ENCODE measurements at regions of chr3 and their contacts with region 1.

Region 1: DNA sequence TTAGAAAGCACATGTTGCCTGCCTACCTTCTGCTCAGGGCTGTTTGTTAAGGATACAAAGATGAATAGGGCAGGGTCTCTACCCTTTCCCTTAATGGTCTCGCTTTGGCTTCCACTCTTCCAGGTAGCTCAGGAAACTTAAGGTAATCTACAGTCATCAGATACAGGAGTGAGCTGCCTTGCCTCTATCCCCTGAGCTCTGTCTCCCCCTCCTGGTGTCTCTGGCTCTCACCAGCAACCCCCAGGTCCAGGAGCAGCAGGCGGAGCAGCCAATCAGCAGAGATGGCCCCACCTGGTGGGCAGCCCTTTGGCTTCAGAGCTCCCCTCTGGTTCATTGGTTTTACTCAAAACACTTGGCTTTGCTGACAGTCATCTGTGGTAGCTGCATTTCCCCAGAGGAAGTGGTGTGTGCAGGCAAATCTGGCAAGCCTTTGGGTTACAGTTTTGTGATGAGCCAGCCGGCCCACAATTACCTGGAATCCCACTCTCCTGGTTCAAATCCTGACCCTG is 8.5 kb upstream of the CX3CR1 start:
- DNase-seq: peak; percentile 91
- ATAC-seq: peak; percentile 96
- H3K4me3 Mint-ChIP-seq: no peak overlapping the region
- H3K27ac Mint-ChIP-seq: peak overlapping the region; percentile 0
- H3K4me1 Mint-ChIP-seq: peaks cover 46% of the 10 kb centered on the region
- H3K27me3 Mint-ChIP-seq: peaks cover 3% of the 10 kb centered on the region

Region 2: GRCh38 chr3:38662544-38662943 is 625.8 kb before region 1 on chr3:
- CTCF ChIA-PET with region 1: no interaction called
- POLR2A ChIA-PET with region 1: no interaction called
- DNase-seq: no peak
- ATAC-seq: no peak
- H3K4me3 Mint-ChIP-seq: no peak overlapping the region
- H3K27ac Mint-ChIP-seq: no peak overlapping the region
- H3K4me1 Mint-ChIP-seq: no peaks in the 10 kb centered on the region
- H3K27me3 Mint-ChIP-seq: peaks cover 30% of the 10 kb centered on the region

Region 3: DNA sequence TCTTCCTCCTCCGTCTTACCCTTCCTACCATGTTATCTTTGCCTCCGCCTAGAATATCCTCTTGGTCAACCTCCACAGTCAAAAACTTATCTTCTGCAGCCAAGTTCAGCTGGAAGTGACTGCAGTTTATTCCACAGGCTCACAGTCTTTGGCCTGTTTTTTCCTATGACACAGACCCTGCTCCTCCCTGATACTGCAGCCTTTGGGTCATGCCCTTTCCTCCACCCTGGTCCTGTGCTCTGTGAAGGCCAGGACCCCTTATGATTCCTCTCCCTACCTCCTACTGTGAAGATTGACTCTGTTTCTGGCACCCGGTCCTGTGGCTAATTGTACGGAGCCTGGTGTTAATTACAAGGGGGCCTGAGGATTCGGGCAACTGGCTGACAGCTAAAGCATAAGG is 589.6 kb before region 1 on chr3:
- CTCF ChIA-PET with region 1: no interaction called
- POLR2A ChIA-PET with region 1: no interaction called
- DNase-seq: no peak
- ATAC-seq: no peak
- H3K4me3 Mint-ChIP-seq: no peak overlapping the region
- H3K27ac Mint-ChIP-seq: no peak overlapping the region
- H3K4me1 Mint-ChIP-seq: no peaks in the 10 kb centered on the region
- H3K27me3 Mint-ChIP-seq: peaks cover 11% of the 10 kb centered on the region

Region 4: GRCh38 chr3:39086144-39086543 is 202.2 kb before region 1 on chr3:
- CTCF ChIA-PET with region 1: interaction called, 31 read pairs
- POLR2A ChIA-PET with region 1: no interaction called
- DNase-seq: no peak
- ATAC-seq: no peak
- H3K4me3 Mint-ChIP-seq: no peak overlapping the region
- H3K27ac Mint-ChIP-seq: no peak overlapping the region
- H3K4me1 Mint-ChIP-seq: peaks cover 5% of the 10 kb centered on the region
- H3K27me3 Mint-ChIP-seq: no peaks in the 10 kb centered on the region

Region 5: GRCh38 chr3:39146984-39147591 is 141.3 kb before region 1 on chr3:
- CTCF ChIA-PET with region 1: interaction called, 11 read pairs
- POLR2A ChIA-PET with region 1: no interaction called
- DNase-seq: peak; percentile 77
- ATAC-seq: peak; percentile 48
- H3K4me3 Mint-ChIP-seq: peak overlapping the region; percentile 79
- H3K27ac Mint-ChIP-seq: peak overlapping the region; percentile 99
- H3K4me1 Mint-ChIP-seq: peaks cover 75% of the 10 kb centered on the region
- H3K27me3 Mint-ChIP-seq: no peaks in the 10 kb centered on the region

Region 6: DNA sequence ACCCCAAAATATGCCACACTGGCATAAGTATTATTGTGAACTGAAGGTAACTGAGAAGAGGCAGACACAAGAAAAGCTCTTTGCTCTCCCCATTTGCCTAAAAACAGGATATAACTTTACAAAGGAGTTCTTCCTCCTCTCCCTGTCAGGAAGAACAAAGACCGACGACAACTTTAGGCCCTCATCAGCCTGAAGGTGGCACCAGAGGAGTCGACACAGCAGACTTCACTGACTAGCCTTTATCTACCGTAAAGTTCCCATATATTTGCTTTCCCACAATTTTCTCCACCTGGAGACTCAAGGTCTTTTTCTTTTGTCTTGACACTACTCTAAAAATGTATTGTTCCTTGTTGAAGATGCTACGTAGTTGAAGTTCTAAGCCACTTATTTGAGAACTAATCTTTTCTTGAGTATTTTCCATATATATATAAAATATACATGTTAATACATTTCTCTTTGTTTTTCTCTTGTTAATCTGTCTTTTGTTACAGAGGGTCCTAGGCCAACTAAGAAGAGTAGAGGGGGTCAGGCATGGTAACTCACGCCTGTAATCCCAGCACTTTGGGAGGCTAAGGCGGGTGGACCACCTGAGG is 79.8 kb before region 1 on chr3:
- CTCF ChIA-PET with region 1: interaction called, 23 read pairs
- POLR2A ChIA-PET with region 1: interaction called, 5 read pairs
- DNase-seq: peak; percentile 55
- ATAC-seq: peak; percentile 69
- H3K4me3 Mint-ChIP-seq: no peak overlapping the region
- H3K27ac Mint-ChIP-seq: no peak overlapping the region
- H3K4me1 Mint-ChIP-seq: peaks cover 12% of the 10 kb centered on the region
- H3K27me3 Mint-ChIP-seq: peaks cover 23% of the 10 kb centered on the region

Region 7: GRCh38 chr3:39260957-39261356 is 27.4 kb before region 1 on chr3:
- CTCF ChIA-PET with region 1: interaction called, 29 read pairs
- POLR2A ChIA-PET with region 1: no interaction called
- DNase-seq: peak; percentile 80
- ATAC-seq: peak; percentile 93
- H3K4me3 Mint-ChIP-seq: no peak overlapping the region
- H3K27ac Mint-ChIP-seq: no peak overlapping the region
- H3K4me1 Mint-ChIP-seq: peaks cover 26% of the 10 kb centered on the region
- H3K27me3 Mint-ChIP-seq: peaks cover 38% of the 10 kb centered on the region

Region 8: DNA sequence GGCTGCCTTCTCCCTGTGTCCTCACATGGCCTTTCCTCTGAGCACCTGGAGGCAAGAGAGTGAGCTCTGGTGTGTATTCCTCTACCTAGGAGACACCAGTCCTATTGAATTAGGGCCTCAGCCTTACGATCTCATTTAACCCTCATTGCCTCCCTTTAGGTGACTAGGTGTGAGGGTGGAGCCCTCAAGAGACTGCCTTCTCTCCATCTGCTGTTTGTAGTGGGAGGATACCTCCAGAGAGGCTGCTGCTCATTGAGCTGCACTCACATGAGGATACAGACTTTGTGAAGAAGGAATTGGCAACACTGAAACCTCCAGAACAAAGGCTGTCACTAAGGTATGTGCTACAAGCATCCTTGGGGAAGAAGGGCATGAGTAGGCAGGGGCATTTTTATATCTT is 41.1 kb after region 1 on chr3 and contains the start of gene CCR8:
- CTCF ChIA-PET with region 1: interaction called, 18 read pairs
- POLR2A ChIA-PET with region 1: no interaction called
- DNase-seq: no peak
- ATAC-seq: peak; percentile 58
- H3K4me3 Mint-ChIP-seq: no peak within 1 kb of the TSS
- H3K27ac Mint-ChIP-seq: no peak within 1 kb of the TSS
- H3K4me1 Mint-ChIP-seq: peaks cover 59% of the 10 kb centered on the region
- H3K27me3 Mint-ChIP-seq: no peaks in the 10 kb centered on the region
- total RNA-seq, gene CCR8: 0.55 to 0.94 TPM

Region 9: DNA sequence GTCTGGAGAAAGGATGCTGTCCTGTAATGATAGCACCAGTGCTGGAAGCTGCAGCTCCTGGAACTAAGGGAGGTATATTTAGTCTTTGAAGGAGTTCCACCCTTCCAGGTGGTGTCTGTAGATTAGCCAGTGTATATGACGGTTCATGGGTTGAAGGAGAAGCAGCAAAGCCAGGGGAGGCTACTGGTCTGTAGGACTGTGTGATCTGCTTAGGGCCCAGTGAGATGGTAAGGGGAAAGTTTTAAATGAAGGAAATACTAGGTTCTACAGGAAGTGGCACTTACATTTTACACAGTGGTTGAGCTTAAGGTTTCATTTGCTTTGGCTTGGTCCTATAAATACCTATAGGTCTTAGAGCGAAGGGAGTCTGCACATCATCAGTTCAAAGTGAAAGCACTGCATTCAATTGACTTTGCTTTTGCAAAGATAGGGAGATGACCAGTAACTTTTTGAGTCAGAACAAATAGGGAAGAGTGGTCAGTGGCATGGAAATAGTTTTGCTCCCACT is 100.4 kb after region 1 on chr3:
- CTCF ChIA-PET with region 1: interaction called, 11 read pairs
- POLR2A ChIA-PET with region 1: no interaction called
- DNase-seq: peak; percentile 37
- ATAC-seq: peak; percentile 28
- H3K4me3 Mint-ChIP-seq: peak overlapping the region; percentile 60
- H3K27ac Mint-ChIP-seq: peak overlapping the region; percentile 91
- H3K4me1 Mint-ChIP-seq: peaks cover 82% of the 10 kb centered on the region
- H3K27me3 Mint-ChIP-seq: no peaks in the 10 kb centered on the region

Measured in activated CD8-positive, alpha-beta T cell treated with anti-CD3 and anti-CD28 coated beads, Interleukin-2, amount 10 ng/mL, durations not matched to agents 7 days and 5 days (primary cell).